Caco-2 (cell line): ENCODE measurements at regions of chr12 and their contacts with region 1.

Region 1: DNA sequence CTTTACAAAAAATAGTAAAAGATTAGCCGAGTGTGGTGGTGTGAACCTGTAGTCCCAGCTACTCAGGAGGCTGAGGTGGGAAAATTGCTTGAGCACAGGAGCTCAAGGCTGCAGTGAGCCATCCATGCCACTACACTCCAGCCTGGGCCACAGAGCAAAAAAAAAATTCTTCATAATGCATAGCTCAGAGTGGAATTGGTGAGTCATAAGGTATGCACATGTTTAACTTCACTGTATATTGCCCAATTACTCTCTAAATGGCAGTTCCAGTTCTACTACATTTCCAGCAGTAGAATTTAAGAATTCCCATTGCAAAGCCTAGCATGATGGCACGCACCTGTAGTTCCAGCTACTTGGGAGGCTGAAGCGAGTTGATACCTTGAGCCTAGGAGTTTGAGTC is 26.9 kb upstream of the CLIP1 start:
- DNase-seq: peak; percentile 62 to 80
- H3K4me3 ChIP-seq: no peak overlapping the region
- H3K4me3 Mint-ChIP-seq: no peak overlapping the region
- H3K27ac Mint-ChIP-seq: peak overlapping the region; percentile 43
- H3K4me1 ChIP-seq: peaks cover 31% of the 10 kb centered on the region
- H3K4me1 Mint-ChIP-seq: peaks cover 12% of the 10 kb centered on the region
- H3K27me3 ChIP-seq: no peaks in the 10 kb centered on the region
- H3K27me3 Mint-ChIP-seq: no peaks in the 10 kb centered on the region
- CTCF ChIP-seq: no peak

Region 2: GRCh38 chr12:122427412-122427811 is 21.9 kb before region 1 on chr12:
- CTCF ChIA-PET with region 1: no interaction called
- POLR2A ChIA-PET with region 1: no interaction called
- intact Hi-C with region 1: loop called (anchors 1 kb)
- DNase-seq: no peak
- H3K4me3 ChIP-seq: no peak overlapping the region
- H3K4me3 Mint-ChIP-seq: no peak overlapping the region
- H3K27ac Mint-ChIP-seq: no peak overlapping the region
- H3K4me1 ChIP-seq: peaks cover 20% of the 10 kb centered on the region
- H3K4me1 Mint-ChIP-seq: peaks cover 14% of the 10 kb centered on the region
- H3K27me3 ChIP-seq: no peaks in the 10 kb centered on the region
- H3K27me3 Mint-ChIP-seq: no peaks in the 10 kb centered on the region
- CTCF ChIP-seq: no peak

Region 3: GRCh38 chr12:122463806-122464205 is 14.5 kb after region 1 on chr12:
- CTCF ChIA-PET with region 1: interaction called, 3 read pairs
- POLR2A ChIA-PET with region 1: no interaction called
- intact Hi-C with region 1: loop called (anchors 1 kb)
- DNase-seq: no peak
- H3K4me3 ChIP-seq: no peak overlapping the region
- H3K4me3 Mint-ChIP-seq: no peak overlapping the region
- H3K27ac Mint-ChIP-seq: peak overlapping the region; percentile 86
- H3K4me1 ChIP-seq: peaks cover 37% of the 10 kb centered on the region
- H3K4me1 Mint-ChIP-seq: no peaks in the 10 kb centered on the region
- H3K27me3 ChIP-seq: no peaks in the 10 kb centered on the region
- H3K27me3 Mint-ChIP-seq: no peaks in the 10 kb centered on the region
- CTCF ChIP-seq: no peak

Region 4: GRCh38 chr12:122995503-122996187 is 546.3 kb after region 1 on chr12:
- CTCF ChIA-PET with region 1: no interaction called
- POLR2A ChIA-PET with region 1: no interaction called
- intact Hi-C with region 1: no loop called
- DNase-seq: no peak
- H3K4me3 ChIP-seq: no peak overlapping the region
- H3K4me3 Mint-ChIP-seq: no peak overlapping the region
- H3K27ac Mint-ChIP-seq: no peak overlapping the region
- H3K4me1 ChIP-seq: no peaks in the 10 kb centered on the region
- H3K4me1 Mint-ChIP-seq: no peaks in the 10 kb centered on the region
- H3K27me3 ChIP-seq: no peaks in the 10 kb centered on the region
- H3K27me3 Mint-ChIP-seq: no peaks in the 10 kb centered on the region
- CTCF ChIP-seq: no peak